Posterior vena cava (tissue), 2 donors: ENCODE measurements at regions of chr5 and their contacts with region 1.

Region 1: GRCh38 chr5:171913987-171914273 is 92.5 kb downstream of the FBXW11 start:
- DNase-seq: no peak

Region 2: GRCh38 chr5:171474230-171474813 is 439.6 kb before region 1 on chr5:
- intact Hi-C with region 1: no loop called
- DNase-seq: peak; percentile 50

Region 3: GRCh38 chr5:172006321-172007174 is 92.6 kb after region 1 on chr5 and contains the start of gene FBXW11:
- intact Hi-C with region 1: loop called in 1 of 2 experiments (anchors 10 kb)
- DNase-seq: peak; percentile 99
- total RNA-seq, gene FBXW11: 47.8 to 55.5 TPM

Region 4: DNA sequence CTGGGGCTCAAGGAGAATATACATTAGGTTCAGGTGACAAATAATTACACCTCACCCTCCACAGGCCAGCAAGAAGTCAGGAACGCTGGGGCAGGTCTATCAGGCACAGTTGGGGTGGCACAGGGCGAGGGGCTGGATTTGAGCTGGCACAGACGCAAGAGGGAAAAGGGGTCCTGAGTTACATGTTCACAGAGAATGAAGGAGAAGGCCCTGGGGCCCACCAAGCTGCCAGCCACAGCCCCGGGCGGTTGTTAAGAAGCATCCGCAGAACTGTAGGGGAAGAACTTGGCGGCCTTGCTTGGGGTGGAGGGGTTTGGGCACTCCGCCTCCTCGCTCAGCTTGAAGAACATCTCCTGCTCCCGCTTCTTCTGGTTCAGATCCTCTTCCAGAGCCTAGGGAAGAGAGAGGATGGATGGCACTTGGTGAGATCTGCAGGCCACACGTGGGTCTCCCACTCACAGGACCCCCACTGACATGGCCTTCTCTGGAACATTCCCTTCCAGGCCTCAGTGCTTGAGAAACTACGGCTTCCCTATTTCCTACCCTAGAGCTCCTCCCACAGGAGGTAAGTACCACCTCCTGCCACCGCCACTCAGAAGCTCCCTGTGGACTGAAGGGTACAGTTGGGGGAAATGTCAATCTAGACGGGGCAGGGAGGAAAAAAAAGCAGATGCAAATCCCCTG is 130.8 kb after region 1 on chr5:
- intact Hi-C with region 1: loop called (anchors 5 to 10 kb)
- DNase-seq: no peak

Region 5: GRCh38 chr5:172188033-172188892 is 274.3 kb after region 1 on chr5 and contains the start of gene STK10:
- intact Hi-C with region 1: loop called in 1 of 2 experiments (anchors 10 kb)
- DNase-seq: peak; percentile 97
- total RNA-seq, gene STK10: 25.2 to 33.6 TPM

Region 6: GRCh38 chr5:172403189-172403796 is 489.4 kb after region 1 on chr5:
- intact Hi-C with region 1: no loop called
- DNase-seq: peak; percentile 94